A549 (cell line): ENCODE measurements at regions of chr17 and their contacts with region 1.

Region 1: GRCh38 chr17:37818689-37819088 is 73.8 kb upstream of the HNF1B start:
- DNase-seq: peak in 1 of 2 experiments; percentile 59
- ATAC-seq: peak; percentile 22 to 61; a peak in 5 of 6 replicates
- H3K4me3 ChIP-seq: no peak overlapping the region
- H3K27ac ChIP-seq: peak overlapping the region; percentile 41 to 86; a peak in 5 of 6 replicates
- H3K4me1 ChIP-seq: peaks cover 66% of the 10 kb centered on the region
- CTCF ChIP-seq: no peak
- EP300 ChIP-seq: no peak
- POLR2A ChIP-seq: no peak
- RAD21 ChIP-seq: no peak

Region 2: GRCh38 chr17:37527249-37527851 is 291.3 kb before region 1 on chr17:
- CTCF ChIA-PET with region 1: interaction called, 54 read pairs
- POLR2A ChIA-PET with region 1: no interaction called
- DNase-seq: peak; percentile 70 to 78
- ATAC-seq: peak; percentile 95 to 97
- H3K4me3 ChIP-seq: no peak overlapping the region
- H3K27ac ChIP-seq: no peak overlapping the region
- H3K4me1 ChIP-seq: no peaks in the 10 kb centered on the region
- CTCF ChIP-seq: peak; percentile 91
- EP300 ChIP-seq: no peak
- POLR2A ChIP-seq: no peak
- RAD21 ChIP-seq: peak; percentile 82 to 89

Region 3: DNA sequence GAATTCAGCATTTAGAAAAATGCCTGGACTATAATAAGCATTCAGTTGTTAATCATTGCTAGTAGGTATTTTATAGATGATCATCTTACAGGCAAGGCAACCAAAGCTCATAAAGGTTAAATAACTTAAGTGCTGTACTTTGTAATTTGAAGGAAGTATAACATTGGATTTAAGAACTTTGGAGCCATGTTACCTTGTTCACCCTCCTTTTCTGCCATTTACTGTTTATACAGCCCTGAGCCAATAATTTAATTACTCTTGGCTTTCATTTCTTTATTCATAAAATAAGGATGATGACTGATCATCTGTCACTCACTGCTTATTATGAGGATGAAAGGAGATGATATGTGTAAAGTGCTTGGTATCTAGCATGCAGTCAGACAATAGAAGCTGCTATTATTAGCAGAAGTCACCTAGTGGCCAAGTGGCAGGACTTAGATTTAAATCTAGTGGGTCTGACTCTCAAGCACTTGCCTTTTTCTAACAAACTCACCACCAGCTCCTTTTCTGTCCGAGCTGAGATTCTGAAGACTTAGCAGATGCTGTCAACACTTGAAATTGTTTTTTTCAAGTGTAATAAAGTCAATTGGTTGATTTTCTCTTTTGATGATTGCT is 157.2 kb before region 1 on chr17:
- CTCF ChIA-PET with region 1: interaction called, 41 read pairs
- POLR2A ChIA-PET with region 1: no interaction called
- DNase-seq: peak; percentile 30 to 45
- ATAC-seq: peak; percentile 70 to 71
- H3K4me3 ChIP-seq: no peak overlapping the region
- H3K27ac ChIP-seq: no peak overlapping the region
- H3K4me1 ChIP-seq: no peaks in the 10 kb centered on the region
- CTCF ChIP-seq: no peak; the same call in 2 of the 3 replicates
- EP300 ChIP-seq: no peak
- POLR2A ChIP-seq: no peak
- RAD21 ChIP-seq: no peak

Region 4: GRCh38 chr17:37701496-37701898 is 117.2 kb before region 1 on chr17:
- CTCF ChIA-PET with region 1: interaction called, 82 read pairs
- POLR2A ChIA-PET with region 1: interaction called, 9 read pairs
- DNase-seq: peak; percentile 50 to 75
- ATAC-seq: peak; percentile 67 to 84; a peak in 5 of 6 replicates
- H3K4me3 ChIP-seq: no peak overlapping the region
- H3K27ac ChIP-seq: peak overlapping the region; percentile 72 to 78
- H3K4me1 ChIP-seq: peaks cover 48% of the 10 kb centered on the region
- CTCF ChIP-seq: peak; percentile 94
- EP300 ChIP-seq: no peak
- POLR2A ChIP-seq: no peak
- RAD21 ChIP-seq: peak; percentile 82 to 85

Region 5: DNA sequence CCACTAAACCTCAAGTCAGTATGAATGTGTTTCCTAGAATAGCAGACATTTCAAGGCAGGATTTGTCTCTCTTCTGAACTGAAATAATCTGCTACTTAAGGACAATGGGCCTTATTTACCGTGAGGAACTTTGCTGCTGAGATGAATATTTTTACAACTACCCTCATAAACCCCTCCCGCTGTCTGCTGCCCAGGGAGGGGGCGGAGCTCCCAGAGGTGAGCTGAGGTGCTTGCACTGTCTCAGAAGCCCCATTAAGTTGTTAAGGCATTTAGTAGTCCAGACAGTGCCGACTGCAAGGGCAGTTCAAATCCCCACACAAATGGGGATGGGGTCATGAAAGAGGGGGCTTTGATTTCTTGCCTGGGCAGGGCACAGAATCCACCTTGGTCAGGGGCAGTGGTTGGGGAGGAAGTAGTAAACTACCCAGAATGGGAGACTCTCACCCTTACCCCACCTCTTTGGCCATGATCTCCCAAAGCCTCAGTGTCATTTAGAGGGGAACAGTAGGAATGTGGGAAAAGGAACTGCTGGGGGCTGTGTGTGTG is 93.0 kb before region 1 on chr17:
- CTCF ChIA-PET with region 1: interaction called, 14 read pairs
- POLR2A ChIA-PET with region 1: no interaction called
- DNase-seq: no peak
- ATAC-seq: no peak
- H3K4me3 ChIP-seq: no peak overlapping the region
- H3K27ac ChIP-seq: peak overlapping the region in 1 of 2 experiments; percentile 28; a peak in 2 of 6 replicates
- H3K4me1 ChIP-seq: peaks cover 8% of the 10 kb centered on the region
- CTCF ChIP-seq: no peak
- EP300 ChIP-seq: no peak
- POLR2A ChIP-seq: no peak
- RAD21 ChIP-seq: no peak

Region 6: DNA sequence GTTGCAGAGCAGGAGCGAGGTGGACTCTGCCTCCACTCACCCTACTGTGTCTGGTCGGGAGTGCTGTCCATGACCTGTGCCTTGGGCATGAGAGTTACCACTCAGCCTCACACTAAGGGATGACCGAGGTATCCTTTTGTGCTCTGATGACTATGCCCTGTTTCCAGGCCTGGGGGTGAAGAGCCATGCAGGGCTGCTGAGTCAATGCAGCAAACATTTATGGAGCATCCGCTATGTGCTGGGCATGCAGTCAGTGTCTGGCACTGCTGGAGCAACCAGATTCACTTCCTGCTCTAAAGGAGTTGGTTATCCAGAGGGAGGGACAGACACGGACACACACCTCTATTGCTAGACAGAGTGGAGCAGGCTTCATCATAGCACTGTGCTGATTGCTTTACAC is 66.2 kb before region 1 on chr17:
- CTCF ChIA-PET with region 1: interaction called, 137 read pairs
- POLR2A ChIA-PET with region 1: interaction called, 3 read pairs
- DNase-seq: peak; percentile 80 to 85
- ATAC-seq: peak; percentile 91 to 92
- H3K4me3 ChIP-seq: no peak overlapping the region
- H3K27ac ChIP-seq: peak overlapping the region; percentile 65 to 78
- H3K4me1 ChIP-seq: peaks cover 39% of the 10 kb centered on the region
- CTCF ChIP-seq: no peak
- EP300 ChIP-seq: no peak
- POLR2A ChIP-seq: no peak
- RAD21 ChIP-seq: no peak

Region 7: DNA sequence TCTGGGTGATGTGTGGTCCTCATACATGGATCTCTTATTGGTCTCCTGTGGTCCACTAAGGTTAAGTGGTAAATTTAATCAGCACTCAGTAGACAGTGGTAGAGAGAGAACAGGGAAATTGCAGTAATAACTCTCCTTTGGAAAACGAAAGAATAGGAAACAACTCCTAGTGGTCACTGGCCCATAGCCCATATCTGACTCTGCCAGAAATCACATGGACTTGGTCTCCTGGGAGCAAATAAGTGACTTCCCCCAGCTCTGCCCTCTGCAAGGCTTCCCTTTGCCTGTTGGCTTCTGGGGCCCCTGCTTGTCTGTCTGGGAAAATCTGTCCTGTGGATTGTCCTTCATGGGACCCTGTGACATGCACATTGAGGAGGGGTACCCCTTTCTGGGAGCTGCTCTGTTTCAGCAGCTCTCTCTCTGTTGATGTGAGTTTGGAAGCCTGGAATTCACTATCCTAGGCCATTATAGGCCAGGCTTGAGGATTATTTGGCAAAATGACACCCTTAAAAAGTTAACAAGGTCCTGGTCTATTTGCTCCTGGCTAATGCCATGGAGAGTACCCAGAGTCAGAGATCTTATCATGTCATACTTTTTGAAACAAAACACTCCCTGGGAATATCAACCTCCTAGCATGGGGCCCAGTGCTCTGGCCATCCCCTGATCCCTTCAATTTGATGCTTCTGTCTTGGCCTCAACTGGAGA is 15.8 kb before region 1 on chr17:
- CTCF ChIA-PET with region 1: interaction called, 39 read pairs
- POLR2A ChIA-PET with region 1: no interaction called
- DNase-seq: no peak
- ATAC-seq: peak in 1 of 2 experiments; percentile 22; a peak in 2 of 6 replicates
- H3K4me3 ChIP-seq: no peak overlapping the region
- H3K27ac ChIP-seq: no peak overlapping the region
- H3K4me1 ChIP-seq: no peaks in the 10 kb centered on the region
- CTCF ChIP-seq: no peak
- EP300 ChIP-seq: no peak
- POLR2A ChIP-seq: no peak
- RAD21 ChIP-seq: no peak